Activated T-helper 2 cell treated with anti-CD3 and anti-CD28 coated beads, Interferon-gamma antibody, Interleukin-2, Interleukin-4, amounts not matched to agents 10 μg/mL and 5 μg/mL and 100 μg/mL, durations not matched to agents 14 hours and 24 hours and 36 hours (primary cell): ENCODE measurements at regions of chr6 and their contacts with region 1.

Region 1: DNA sequence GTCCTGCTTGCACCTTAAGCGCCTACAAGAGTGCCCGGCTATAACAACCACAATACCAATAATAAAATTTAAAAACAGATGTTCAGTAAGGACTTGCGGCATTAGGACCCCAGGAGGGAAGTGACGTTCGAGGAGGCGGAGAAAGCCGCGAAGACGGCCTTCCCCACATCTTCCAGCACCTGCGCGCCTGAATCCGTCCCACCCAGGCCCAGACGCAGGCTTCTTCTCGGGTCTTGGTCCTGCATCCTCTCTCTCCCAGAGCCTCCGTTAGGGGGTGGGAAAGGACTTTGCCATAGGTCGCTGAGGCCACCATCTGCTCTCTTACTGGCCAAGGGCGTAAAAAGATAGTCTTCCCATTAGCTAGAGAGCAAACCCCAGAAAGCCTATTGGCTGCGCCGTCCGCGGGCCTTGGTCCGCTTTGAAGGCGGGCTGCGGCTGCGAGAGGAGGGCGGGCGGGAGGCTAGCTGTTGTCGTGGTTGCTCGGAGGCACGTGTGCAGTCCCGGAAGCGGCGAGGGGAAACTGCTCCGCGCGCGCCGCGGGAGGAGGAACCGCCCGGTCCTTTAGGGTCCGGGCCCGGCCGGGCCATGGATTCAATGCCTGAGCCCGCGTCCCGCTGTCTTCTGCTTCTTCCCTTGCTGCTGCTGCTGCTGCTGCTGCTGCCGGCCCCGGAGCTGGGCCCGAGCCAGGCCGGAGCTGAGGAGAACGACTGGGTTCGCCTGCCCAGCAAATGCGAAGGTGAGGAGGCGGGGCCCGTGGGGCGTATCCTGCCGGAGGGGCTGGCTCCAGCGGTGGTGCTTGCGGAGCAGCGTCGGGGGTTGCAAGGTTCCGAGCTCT is at the start of gene CNPY3:
- DNase-seq: peak; percentile 96
- H3K4me3 Mint-ChIP-seq: peak within 1 kb of the TSS; percentile 96
- H3K27ac Mint-ChIP-seq: peak within 1 kb of the TSS; percentile 91
- H3K4me1 Mint-ChIP-seq: peaks cover 34% of the 10 kb centered on the region
- H3K27me3 Mint-ChIP-seq: no peaks in the 10 kb centered on the region
- total RNA-seq, gene CNPY3: 51.3 and 53.1 TPM in 2 replicates

Region 2: DNA sequence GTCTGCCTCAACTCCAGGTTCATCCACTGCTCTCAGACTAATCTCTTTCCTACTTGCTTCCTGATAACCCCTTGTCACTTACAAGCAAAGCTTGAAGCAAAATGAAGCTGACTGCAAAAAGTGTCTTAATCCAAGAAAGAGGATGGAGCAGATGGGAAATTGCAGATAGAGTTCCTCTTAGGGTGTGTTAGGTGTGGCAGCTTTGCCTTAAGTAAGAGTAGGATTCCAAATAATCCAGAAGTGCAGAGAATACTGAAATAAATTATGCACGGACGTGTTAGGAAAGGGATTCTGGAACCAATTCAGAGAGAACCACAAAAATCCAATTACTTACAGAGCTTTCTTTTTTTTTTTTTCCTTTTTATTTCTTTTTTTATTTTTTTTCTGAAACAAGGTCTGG is 55.9 kb before region 1 on chr6:
- intact Hi-C with region 1: no loop called
- DNase-seq: no peak
- H3K4me3 Mint-ChIP-seq: no peak overlapping the region
- H3K27ac Mint-ChIP-seq: no peak overlapping the region
- H3K4me1 Mint-ChIP-seq: no peaks in the 10 kb centered on the region
- H3K27me3 Mint-ChIP-seq: no peaks in the 10 kb centered on the region

Region 3: GRCh38 chr6:42901536-42901957 is 27.7 kb before region 1 on chr6:
- intact Hi-C with region 1: loop called (anchors 2 kb)
- DNase-seq: peak; percentile 61
- H3K4me3 Mint-ChIP-seq: no peak overlapping the region
- H3K27ac Mint-ChIP-seq: no peak overlapping the region
- H3K4me1 Mint-ChIP-seq: peaks cover 19% of the 10 kb centered on the region
- H3K27me3 Mint-ChIP-seq: no peaks in the 10 kb centered on the region

Region 4: GRCh38 chr6:43013843-43014433 is 84.7 kb after region 1 on chr6 and contains the starts of genes KLHDC3 and MEA1:
- intact Hi-C with region 1: loop called (anchors 2 kb)
- DNase-seq: peak; percentile 99
- H3K4me3 Mint-ChIP-seq: peak within 1 kb of the TSS; percentile 96
- H3K27ac Mint-ChIP-seq: peak within 1 kb of the TSS; percentile 74
- H3K4me1 Mint-ChIP-seq: peaks cover 35% of the 10 kb centered on the region
- H3K27me3 Mint-ChIP-seq: no peaks in the 10 kb centered on the region
- total RNA-seq, gene KLHDC3: 71.2 and 74.6 TPM in 2 replicates
- total RNA-seq, gene MEA1: 90.9 and 91.2 TPM in 2 replicates

Region 5: GRCh38 chr6:43427406-43428111 is 498.4 kb after region 1 on chr6 and contains the start of gene ABCC10:
- intact Hi-C with region 1: loop called (anchors 5 kb)
- DNase-seq: peak; percentile 93
- H3K4me3 Mint-ChIP-seq: peak within 1 kb of the TSS; percentile 91
- H3K27ac Mint-ChIP-seq: peak within 1 kb of the TSS; percentile 93
- H3K4me1 Mint-ChIP-seq: peaks cover 19% of the 10 kb centered on the region
- H3K27me3 Mint-ChIP-seq: no peaks in the 10 kb centered on the region
- total RNA-seq, gene ABCC10: 45.6 and 46.7 TPM in 2 replicates